K562 (cell line): ENCODE measurements at regions of chr1 and their contacts with region 1.

Region 1: GRCh38 chr1:1869469-1869868 is 21.4 kb downstream of the GNB1 start:
- DNase-seq: no peak
- ATAC-seq: peak; percentile 20; the same call in 1 of the 3 replicates
- H3K4me3 ChIP-seq: no peak overlapping the region
- H3K27ac ChIP-seq: no peak overlapping the region
- H3K4me1 ChIP-seq: peaks cover 4 to 5% of the 10 kb centered on the region in 2 experiments
- H3K27me3 ChIP-seq: no peaks in the 10 kb centered on the region
- CTCF ChIP-seq: no peak
- EP300 ChIP-seq: no peak
- POLR2A ChIP-seq: no peak
- RAD21 ChIP-seq: no peak

Region 2: GRCh38 chr1:1883092-1883873 is 13.8 kb after region 1 on chr1:
- CTCF ChIA-PET with region 1: no interaction called
- POLR2A ChIA-PET with region 1: interaction called, 35 read pairs
- in situ Hi-C with region 1: no loop called
- intact Hi-C with region 1: no loop called
- DNase-seq: peak; percentile 67 to 89 (median 76)
- ATAC-seq: peak; percentile 89
- H3K4me3 ChIP-seq: no peak overlapping the region
- H3K27ac ChIP-seq: 0 out of 3 replicates have a peak overlapping the region, but pooled peaks have one; percentile 10
- H3K4me1 ChIP-seq: peaks cover 34 to 35% of the 10 kb centered on the region in 2 experiments; a peak in 4 of 5 replicates
- H3K27me3 ChIP-seq: no peaks in the 10 kb centered on the region
- CTCF ChIP-seq: no peak
- EP300 ChIP-seq: peak; percentile 77
- POLR2A ChIP-seq: no peak; the same call in 1 of the 2 replicates
- RAD21 ChIP-seq: no peak